ENCODE measurements at regions of chrX and their contacts with region 1.

Region 1: GRCh38 chrX:46545111-46546005 is at the start of gene ZNF674:
- DNase-seq: peak; percentile 96
- ATAC-seq: peak; percentile 88
- H3K4me3 Mint-ChIP-seq: peak within 1 kb of the TSS; percentile 88
- H3K27ac Mint-ChIP-seq: peak within 1 kb of the TSS; percentile 94
- H3K4me1 Mint-ChIP-seq: peaks cover 32% of the 10 kb centered on the region
- H3K27me3 Mint-ChIP-seq: no peaks in the 10 kb centered on the region
- total RNA-seq, gene ZNF674: 2.0 to 2.6 TPM

Region 2: GRCh38 chrX:46446727-46447378 is 98.5 kb before region 1 on chrX:
- CTCF ChIA-PET with region 1: no interaction called
- POLR2A ChIA-PET with region 1: no interaction called
- intact Hi-C with region 1: loop called (anchors 1 kb)
- DNase-seq: peak; percentile 92
- ATAC-seq: peak; percentile 94
- H3K4me3 Mint-ChIP-seq: peak overlapping the region; percentile 82
- H3K27ac Mint-ChIP-seq: peak overlapping the region; percentile 96
- H3K4me1 Mint-ChIP-seq: peaks cover 22% of the 10 kb centered on the region
- H3K27me3 Mint-ChIP-seq: no peaks in the 10 kb centered on the region

Region 3: GRCh38 chrX:46588263-46588662 is 42.9 kb after region 1 on chrX:
- CTCF ChIA-PET with region 1: no interaction called
- POLR2A ChIA-PET with region 1: no interaction called
- intact Hi-C with region 1: loop called in 1 of 2 experiments (anchors 1 kb)
- DNase-seq: peak; percentile 66
- ATAC-seq: peak; percentile 51
- H3K4me3 Mint-ChIP-seq: peak overlapping the region; percentile 40
- H3K27ac Mint-ChIP-seq: peak overlapping the region; percentile 84
- H3K4me1 Mint-ChIP-seq: peaks cover 44% of the 10 kb centered on the region
- H3K27me3 Mint-ChIP-seq: no peaks in the 10 kb centered on the region

Region 4: DNA sequence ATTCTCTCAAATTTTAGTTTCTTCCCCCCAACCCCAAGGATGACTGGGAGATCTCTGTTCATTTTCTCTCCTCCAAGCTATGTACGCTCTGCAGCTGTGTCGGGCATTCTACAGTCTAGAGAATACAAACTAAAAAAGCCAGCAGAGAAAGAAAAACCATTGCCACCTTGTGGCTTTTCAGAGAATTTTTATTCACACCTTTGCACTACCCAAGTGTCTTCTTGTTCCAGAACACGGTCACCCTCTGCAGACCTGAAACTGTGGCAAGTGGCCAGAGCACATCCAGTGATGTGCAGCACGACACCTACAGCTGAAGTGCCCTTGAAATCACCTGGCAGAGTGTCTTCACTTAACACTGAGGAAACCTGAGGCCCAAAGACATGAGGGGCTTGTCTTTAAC is 96.8 kb after region 1 on chrX:
- CTCF ChIA-PET with region 1: no interaction called
- POLR2A ChIA-PET with region 1: no interaction called
- intact Hi-C with region 1: loop called (anchors 5 kb)
- DNase-seq: peak; percentile 14
- ATAC-seq: peak; percentile 83
- H3K4me3 Mint-ChIP-seq: no peak overlapping the region
- H3K27ac Mint-ChIP-seq: no peak overlapping the region
- H3K4me1 Mint-ChIP-seq: peaks cover 16% of the 10 kb centered on the region
- H3K27me3 Mint-ChIP-seq: no peaks in the 10 kb centered on the region

Region 5: DNA sequence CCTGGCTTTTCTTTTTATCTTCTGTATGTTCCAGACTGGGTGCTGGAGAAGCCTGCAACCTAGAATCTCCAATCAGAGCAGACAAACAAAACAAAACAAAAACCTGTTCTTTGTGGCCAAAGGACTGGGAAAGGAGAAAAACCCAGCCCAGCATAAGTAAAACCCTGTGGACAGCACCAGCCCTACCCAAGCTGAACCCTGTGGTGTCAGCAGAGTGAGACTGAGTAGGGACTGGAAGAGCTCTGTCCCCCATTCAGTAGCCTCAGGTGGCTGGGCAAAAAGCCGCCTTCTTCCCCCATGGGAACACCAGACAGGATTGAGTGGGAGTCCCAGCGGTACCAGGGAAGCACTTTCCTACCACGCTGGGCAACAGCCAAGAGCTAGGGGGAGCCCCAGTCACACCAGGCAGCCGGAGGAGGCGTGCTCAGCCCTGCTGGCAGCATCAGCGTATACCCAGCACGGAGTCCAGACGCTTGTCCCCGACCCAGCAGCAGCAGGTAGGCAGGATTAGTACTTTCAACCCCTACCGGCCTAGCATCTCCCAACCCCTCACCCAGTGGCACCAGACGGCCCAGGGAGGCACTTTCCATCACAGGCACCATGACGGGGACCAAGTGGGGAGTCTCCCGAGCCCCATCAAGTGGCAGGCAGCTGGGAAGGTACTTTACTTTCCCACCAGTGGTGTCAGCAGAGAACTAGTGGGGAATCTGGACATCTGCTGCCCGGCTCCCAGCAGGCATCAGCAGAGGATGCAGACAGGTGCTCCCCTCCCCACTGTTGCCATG is 358.3 kb after region 1 on chrX:
- CTCF ChIA-PET with region 1: no interaction called
- POLR2A ChIA-PET with region 1: no interaction called
- intact Hi-C with region 1: no loop called
- DNase-seq: peak; percentile 73
- ATAC-seq: peak; percentile 98
- H3K4me3 Mint-ChIP-seq: peak overlapping the region; percentile 46
- H3K27ac Mint-ChIP-seq: no peak overlapping the region
- H3K4me1 Mint-ChIP-seq: peaks cover 2% of the 10 kb centered on the region
- H3K27me3 Mint-ChIP-seq: peaks cover 3% of the 10 kb centered on the region

Measured in activated CD4-positive, alpha-beta T cell treated with anti-CD3 and anti-CD28 coated beads for 36 hours (primary cell).